ENCODE measurements at regions of chr7 and their contacts with region 1.

Region 1: GRCh38 chr7:122416316-122416715 is 111.8 kb upstream of the FEZF1 start:
- DNase-seq: no peak
- ATAC-seq: no peak
- H3K4me3 ChIP-seq: no peak overlapping the region
- H3K27ac ChIP-seq: no peak overlapping the region
- H3K4me1 ChIP-seq: no peaks in the 10 kb centered on the region
- H3K27me3 ChIP-seq: no peaks in the 10 kb centered on the region
- CTCF ChIP-seq: no peak

Region 2: DNA sequence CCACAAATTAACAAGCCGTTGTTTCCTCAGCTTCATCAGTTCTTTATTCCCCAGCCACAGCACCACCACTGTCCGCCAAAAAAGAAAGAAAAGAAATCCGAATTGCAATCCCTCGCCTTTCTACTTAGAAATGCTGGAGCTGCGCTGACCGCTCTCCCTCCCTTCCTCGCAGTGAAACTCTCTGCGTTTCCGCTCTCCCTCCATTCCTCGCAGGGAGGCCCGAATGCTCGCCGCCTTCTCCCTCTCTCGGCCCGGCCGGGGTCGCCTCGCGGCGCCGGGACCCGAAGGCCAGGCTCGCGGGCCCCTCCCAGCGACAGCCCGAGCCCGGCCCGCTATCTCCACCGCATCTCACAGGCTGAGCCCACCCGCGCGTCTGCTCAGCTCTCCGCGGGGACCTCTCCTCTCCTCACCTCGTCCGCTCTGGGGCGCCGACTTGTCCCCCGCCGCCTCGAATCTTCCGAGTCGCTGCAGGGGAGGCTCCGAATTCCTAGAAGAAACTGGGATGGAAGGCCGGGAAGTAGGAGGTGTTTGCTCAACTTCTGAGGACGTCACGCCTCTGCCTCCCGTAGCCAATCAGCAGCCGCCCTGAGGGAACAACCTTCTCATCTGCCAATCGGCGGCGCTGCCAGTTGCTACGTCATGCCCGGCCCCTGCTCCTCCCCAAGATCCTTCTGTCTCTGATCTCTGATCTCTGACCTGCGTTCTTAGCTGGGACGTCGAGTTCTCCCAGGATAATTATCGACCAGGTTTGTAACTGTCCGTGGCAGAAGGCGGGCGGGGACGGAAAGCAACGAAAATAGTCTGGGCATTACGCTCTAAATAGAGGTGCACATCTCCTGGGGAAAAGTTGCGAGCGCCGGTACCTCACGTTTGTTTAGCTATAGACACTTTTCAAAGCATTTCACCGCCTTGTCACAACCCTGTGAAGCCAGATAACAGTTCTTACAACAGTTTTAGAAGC is 272.3 kb before region 1 on chr7 and contains the start of gene AASS:
- intact Hi-C with region 1: no loop called
- DNase-seq: peak; percentile 98
- ATAC-seq: peak; percentile 98 to 100 (median 99)
- H3K4me3 ChIP-seq: peak within 1 kb of the TSS; percentile 58 to 96 (median 84)
- H3K27ac ChIP-seq: peak within 1 kb of the TSS; percentile 71 to 96 (median 92)
- H3K4me1 ChIP-seq: peaks cover 0 to 35% (median 19%) of the 10 kb centered on the region in 9 donors
- H3K27me3 ChIP-seq: peaks cover 0 to 10% (median 0%) of the 10 kb centered on the region in 7 donors
- CTCF ChIP-seq: peak in 1 of 9 donors; percentile 26
- total RNA-seq, gene AASS: 14.6 to 48.1 (median 29.1) TPM

Region 3: DNA sequence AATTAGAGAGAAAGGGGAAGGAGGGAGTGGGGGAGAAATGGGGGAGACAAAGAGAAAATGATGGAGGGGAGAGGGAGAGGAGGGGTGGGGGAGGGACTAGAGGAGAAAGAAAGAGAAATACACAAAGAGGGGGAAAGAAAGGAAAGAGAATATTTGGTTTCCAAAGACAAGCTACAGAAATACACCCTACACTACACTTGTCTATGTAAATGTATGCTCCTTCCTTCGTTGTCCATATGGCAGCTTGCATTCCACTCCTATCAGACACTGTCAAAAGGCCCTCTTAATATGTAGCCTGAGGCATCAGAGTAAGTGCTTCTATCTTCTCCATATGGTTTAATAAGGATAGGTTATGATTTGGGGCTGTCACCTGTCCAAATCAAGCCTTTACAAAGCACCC is 18.9 kb before region 1 on chr7:
- intact Hi-C with region 1: no loop called
- DNase-seq: no peak
- ATAC-seq: no peak
- H3K4me3 ChIP-seq: no peak overlapping the region
- H3K27ac ChIP-seq: no peak overlapping the region
- H3K4me1 ChIP-seq: no peaks in the 10 kb centered on the region
- H3K27me3 ChIP-seq: no peaks in the 10 kb centered on the region
- CTCF ChIP-seq: no peak

Region 4: DNA sequence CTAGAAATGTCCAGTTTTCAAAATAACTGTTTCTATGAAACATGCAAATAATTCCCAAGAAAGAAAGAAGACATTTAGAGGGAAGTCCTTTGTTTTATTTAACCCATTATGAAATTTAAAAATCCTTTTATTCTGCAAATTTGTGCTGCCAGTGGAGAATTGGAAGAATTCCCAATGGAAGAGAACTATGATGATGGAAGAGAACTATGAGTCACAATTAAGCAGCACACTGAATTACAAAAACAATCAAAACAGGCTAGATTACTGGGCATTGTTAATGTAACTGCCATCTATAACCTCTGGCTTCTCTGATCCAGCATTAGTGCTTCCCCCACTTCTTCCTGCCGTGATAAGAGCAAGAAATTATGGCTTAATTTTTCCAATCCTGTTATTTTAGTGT is 14.4 kb after region 1 on chr7:
- intact Hi-C with region 1: loop called in 1 of 10 experiments (anchors 1 kb)
- DNase-seq: no peak
- ATAC-seq: no peak
- H3K4me3 ChIP-seq: no peak overlapping the region
- H3K27ac ChIP-seq: no peak overlapping the region
- H3K4me1 ChIP-seq: no peaks in the 10 kb centered on the region
- H3K27me3 ChIP-seq: no peaks in the 10 kb centered on the region
- CTCF ChIP-seq: no peak

Region 5: DNA sequence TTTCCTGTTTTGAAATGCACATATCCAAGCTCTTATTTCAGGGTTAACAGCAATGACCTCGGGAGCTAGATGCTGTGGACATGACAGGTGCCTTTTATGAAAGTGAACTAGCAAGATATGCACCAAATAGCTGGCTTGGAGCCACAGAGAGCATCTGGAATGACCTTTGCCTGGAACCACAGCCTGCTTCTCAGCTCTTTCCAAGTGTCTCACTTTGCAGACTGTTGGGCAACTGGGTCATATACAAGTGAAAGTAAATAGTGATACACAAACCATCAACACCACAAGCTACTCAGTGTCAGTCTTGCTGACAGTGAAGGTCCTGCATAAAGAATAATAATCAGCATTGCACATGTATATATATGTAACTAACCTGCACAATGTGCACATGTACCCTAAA is 99.1 kb after region 1 on chr7:
- intact Hi-C with region 1: no loop called
- DNase-seq: no peak
- ATAC-seq: no peak
- H3K4me3 ChIP-seq: no peak overlapping the region
- H3K27ac ChIP-seq: no peak overlapping the region
- H3K4me1 ChIP-seq: no peaks in the 10 kb centered on the region
- H3K27me3 ChIP-seq: no peaks in the 10 kb centered on the region
- CTCF ChIP-seq: no peak

Measured in heart right ventricle (tissue), 16 donors.